SK-N-SH (cell line): ENCODE measurements at regions of chr11 and their contacts with region 1.

Region 1: DNA sequence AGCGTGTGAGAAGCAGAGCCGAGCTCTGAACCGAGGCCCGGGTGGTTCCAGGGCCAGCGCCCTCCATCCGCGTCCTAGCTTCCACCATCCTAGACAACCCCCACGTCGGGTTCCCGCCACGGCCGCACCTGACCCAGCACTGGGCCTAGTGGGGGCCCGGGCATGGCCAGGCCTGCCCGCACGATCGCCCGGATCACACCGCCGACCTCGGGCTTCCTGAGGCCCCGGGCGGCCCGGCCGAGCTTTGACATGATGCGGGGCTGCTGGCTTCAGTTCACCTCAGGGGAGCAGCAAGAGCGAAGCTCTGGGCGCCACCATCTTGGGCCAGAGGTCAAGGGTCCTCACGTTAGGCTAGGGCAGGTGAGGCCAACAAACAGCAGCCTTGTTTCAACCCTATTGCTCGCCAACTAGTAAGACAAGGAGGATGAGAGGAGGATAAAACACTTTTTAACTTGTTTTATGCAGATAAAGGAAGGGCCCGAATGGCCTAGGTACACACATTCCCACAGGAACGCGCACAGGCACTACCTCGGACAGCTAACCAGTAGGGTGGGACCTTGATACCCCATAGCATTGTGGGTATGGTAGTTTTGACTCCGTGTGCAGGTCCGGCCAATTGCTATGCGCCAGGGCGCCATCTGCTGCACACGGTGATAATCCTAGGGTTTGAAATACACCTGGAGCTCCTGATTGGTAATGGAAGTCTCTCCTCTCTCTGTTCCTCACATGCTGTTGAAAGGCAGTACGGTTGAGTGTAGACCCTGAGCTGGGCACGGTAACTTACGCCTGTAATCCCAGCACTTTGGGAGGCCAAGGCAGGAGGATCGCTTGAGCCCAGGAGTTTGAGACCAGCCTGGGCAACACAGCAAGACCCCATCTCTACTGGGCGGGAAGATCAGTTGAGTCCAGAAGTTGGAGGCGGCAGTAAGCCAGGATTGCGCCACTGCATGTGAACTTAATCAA is at the start of gene MRPL11:
- DNase-seq: peak; percentile 98
- H3K4me3 ChIP-seq: peak within 1 kb of the TSS; percentile 78 to 87
- H3K27ac ChIP-seq: peak within 1 kb of the TSS; percentile 63 to 91
- H3K4me1 ChIP-seq: peaks cover 0 to 5% of the 10 kb centered on the region in 2 experiments; a peak in 1 of 4 replicates
- H3K27me3 ChIP-seq: peaks cover 20% of the 10 kb centered on the region; the same call in 1 of the 2 replicates
- CTCF ChIP-seq: peak; percentile 74
- EP300 ChIP-seq: no peak
- RAD21 ChIP-seq: peak; percentile 55
- polyA plus RNA-seq, gene MRPL11: 33.9 and 45.6 TPM in 2 replicates

Region 2: GRCh38 chr11:66336234-66337102 is 102.3 kb before region 1 on chr11 and contains the start of gene RIN1:
- CTCF ChIA-PET with region 1: no interaction called
- POLR2A ChIA-PET with region 1: no interaction called
- DNase-seq: peak; percentile 94
- H3K4me3 ChIP-seq: peak within 1 kb of the TSS; percentile 68 to 69
- H3K27ac ChIP-seq: peak within 1 kb of the TSS; percentile 94
- H3K4me1 ChIP-seq: peaks cover 27 to 44% of the 10 kb centered on the region in 2 experiments
- H3K27me3 ChIP-seq: no peaks in the 10 kb centered on the region
- CTCF ChIP-seq: peak; percentile 56
- EP300 ChIP-seq: peak; percentile 47 to 78; a peak in 3 of 4 replicates
- RAD21 ChIP-seq: peak; percentile 81
- polyA plus RNA-seq, gene RIN1: 13.0 and 16.9 TPM in 2 replicates

Region 3: DNA sequence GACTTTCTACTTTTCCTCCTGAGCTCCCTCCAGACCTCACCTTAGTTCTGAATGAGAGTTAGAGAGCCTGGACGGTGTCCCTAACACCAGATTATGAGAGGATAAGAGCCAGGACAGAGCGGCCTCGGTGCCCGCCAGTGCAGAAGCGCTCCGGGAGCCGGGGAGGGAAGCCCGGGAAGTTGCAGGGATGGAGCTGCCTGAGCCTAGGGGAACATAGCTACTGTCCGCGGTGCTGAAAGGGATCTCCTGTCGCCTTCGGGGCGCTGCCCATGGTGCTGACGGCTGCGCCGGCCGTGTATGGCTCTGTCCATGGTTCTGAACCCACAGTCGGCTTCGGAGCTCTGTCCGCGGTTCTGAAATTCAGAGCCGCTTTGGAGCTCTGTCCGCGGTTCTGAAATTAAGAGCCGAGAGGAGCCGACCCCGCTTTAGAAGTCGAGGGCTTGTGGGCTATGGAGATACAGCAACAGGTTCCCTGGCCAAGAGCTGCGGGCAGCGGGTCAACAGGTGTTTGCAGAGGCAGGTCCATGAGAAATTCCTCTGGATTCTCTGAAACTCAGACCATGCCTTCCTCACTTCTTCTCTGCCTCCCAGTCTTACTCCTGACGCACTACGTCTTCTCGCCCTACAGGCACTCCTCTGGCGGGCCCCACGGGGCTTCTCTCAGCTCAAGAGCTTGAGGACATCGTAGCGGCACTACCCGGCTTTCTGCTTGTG is 17.1 kb before region 1 on chr11:
- CTCF ChIA-PET with region 1: interaction called, 617 read pairs
- POLR2A ChIA-PET with region 1: interaction called, 3 read pairs
- DNase-seq: peak; percentile 82
- H3K4me3 ChIP-seq: peak overlapping the region in 1 of 2 experiments; percentile 36; a peak in 1 of 4 replicates
- H3K27ac ChIP-seq: no peak overlapping the region
- H3K4me1 ChIP-seq: peaks cover 4 to 14% of the 10 kb centered on the region in 2 experiments; a peak in 2 of 4 replicates
- H3K27me3 ChIP-seq: peaks cover 24% of the 10 kb centered on the region
- CTCF ChIP-seq: no peak
- EP300 ChIP-seq: no peak
- RAD21 ChIP-seq: no peak

Region 4: DNA sequence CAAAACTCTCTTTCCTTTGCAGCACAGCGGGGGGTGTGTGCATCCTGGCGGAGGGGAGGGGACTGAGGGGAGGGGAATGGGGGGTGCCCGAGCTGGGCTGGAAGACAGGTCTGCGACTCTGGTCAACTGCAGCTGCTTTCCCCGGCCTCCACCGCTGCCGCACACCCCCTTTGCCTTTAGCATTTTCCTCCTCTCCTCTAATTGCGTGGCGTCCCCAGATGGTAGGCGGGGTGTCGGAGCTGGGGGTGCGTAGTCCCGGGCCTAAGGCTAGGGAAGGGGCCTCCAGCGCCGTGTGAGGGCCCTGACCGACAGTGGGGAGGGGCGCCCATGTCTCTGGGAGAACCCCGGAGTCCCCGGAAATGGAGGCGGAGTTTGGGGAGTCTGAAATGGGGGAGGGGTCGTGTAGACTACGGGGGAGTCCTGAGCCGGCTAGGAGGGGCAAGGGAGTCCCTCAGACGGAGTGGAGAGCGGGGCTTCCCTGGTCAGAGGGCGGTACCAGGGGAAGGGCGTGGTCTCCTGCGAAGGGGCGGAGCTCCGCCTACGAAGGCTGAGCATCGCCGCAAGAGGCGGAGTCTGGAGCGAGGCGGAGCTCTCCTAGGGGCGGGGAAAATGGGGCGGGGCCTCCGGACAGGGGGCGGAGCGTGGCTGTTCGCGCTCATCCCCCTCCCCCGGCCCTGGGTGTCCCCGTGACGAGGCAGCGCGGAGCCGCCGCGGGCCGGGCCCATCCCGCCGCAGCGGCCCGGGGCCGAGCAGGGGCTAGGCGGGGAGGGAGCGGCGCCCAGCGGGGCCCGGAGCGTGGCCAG is 27.6 kb after region 1 on chr11 and contains the start of gene PELI3:
- CTCF ChIA-PET with region 1: interaction called, 20 read pairs
- POLR2A ChIA-PET with region 1: interaction called, 8 read pairs
- DNase-seq: peak; percentile 98
- H3K4me3 ChIP-seq: peak within 1 kb of the TSS; percentile 76
- H3K27ac ChIP-seq: peak within 1 kb of the TSS; percentile 46 to 78; a peak in 3 of 4 replicates
- H3K4me1 ChIP-seq: peaks cover 5 to 18% of the 10 kb centered on the region in 2 experiments; a peak in 3 of 4 replicates
- H3K27me3 ChIP-seq: no peaks in the 10 kb centered on the region
- CTCF ChIP-seq: no peak
- EP300 ChIP-seq: no peak
- RAD21 ChIP-seq: no peak
- polyA plus RNA-seq, gene PELI3: 6.5 and 7.0 TPM in 2 replicates

Region 5: DNA sequence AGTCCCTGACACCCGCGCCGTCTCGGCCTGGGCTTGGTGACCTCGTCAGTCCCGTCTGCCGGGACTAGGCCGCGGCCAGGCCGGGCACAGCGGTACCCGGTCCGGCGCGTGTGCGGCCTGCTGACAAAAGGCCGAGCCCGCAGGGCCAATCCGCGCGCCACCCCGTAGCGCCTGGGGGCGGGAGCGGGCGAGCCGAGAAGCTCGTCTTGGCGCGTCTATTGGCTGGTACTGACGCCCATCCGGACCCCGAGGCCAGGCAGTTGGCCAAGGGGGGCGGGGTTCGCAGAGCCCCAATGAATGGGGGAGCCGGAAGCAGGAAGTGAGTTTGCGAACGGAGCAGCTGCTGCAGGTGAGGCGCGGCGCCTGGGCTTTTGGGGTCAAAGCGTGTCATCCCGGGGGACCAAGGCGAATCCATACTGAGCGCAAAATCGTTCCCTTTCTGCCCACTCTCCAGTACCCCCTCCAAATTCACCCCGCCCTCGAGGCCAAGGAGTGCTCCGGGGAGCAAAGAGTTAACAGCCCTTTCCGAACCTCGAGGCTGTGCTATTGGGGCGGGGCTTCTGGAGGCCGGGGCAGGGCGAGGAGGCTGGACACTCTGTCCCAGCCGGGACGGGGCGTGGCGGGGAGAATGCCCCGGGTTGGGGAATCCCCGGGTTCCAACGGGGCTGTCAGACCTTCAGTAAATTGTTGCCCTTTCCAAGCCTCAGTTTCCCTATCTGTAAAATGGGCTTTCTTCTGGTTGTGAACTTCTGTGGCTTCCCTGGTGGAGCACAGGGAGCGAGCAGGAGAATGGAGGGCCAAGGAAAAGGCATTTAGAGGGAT is 41.5 kb after region 1 on chr11 and contains the start of gene DPP3:
- CTCF ChIA-PET with region 1: interaction called, 7 read pairs
- POLR2A ChIA-PET with region 1: interaction called, 18 read pairs
- DNase-seq: peak; percentile 99
- H3K4me3 ChIP-seq: peak within 1 kb of the TSS; percentile 64 to 82
- H3K27ac ChIP-seq: peak within 1 kb of the TSS; percentile 85 to 93
- H3K4me1 ChIP-seq: peaks cover 0 to 15% of the 10 kb centered on the region in 2 experiments; a peak in 2 of 4 replicates
- H3K27me3 ChIP-seq: no peaks in the 10 kb centered on the region
- CTCF ChIP-seq: no peak
- EP300 ChIP-seq: no peak
- RAD21 ChIP-seq: no peak
- polyA plus RNA-seq, gene DPP3: 62.1 and 70.6 TPM in 2 replicates